B cell (primary cell): ENCODE measurements at regions of chr11 and their contacts with region 1.

Region 1: GRCh38 chr11:125345421-125346178 is 150.5 kb downstream of the FEZ1 start:
- DNase-seq: peak; percentile 25
- ATAC-seq: no peak
- H3K4me3 ChIP-seq: no peak overlapping the region
- H3K4me3 Mint-ChIP-seq: no peak overlapping the region
- H3K27ac ChIP-seq: no peak overlapping the region
- H3K27ac Mint-ChIP-seq: no peak overlapping the region
- H3K4me1 ChIP-seq: peaks cover 0 to 4% of the 10 kb centered on the region in 2 donors
- H3K4me1 Mint-ChIP-seq: no peaks in the 10 kb centered on the region
- H3K27me3 ChIP-seq: peaks cover 0 to 7% (median 0%) of the 10 kb centered on the region in 4 experiments
- H3K27me3 Mint-ChIP-seq: peaks cover 17% of the 10 kb centered on the region
- CTCF ChIP-seq: peak; percentile 71

Region 2: DNA sequence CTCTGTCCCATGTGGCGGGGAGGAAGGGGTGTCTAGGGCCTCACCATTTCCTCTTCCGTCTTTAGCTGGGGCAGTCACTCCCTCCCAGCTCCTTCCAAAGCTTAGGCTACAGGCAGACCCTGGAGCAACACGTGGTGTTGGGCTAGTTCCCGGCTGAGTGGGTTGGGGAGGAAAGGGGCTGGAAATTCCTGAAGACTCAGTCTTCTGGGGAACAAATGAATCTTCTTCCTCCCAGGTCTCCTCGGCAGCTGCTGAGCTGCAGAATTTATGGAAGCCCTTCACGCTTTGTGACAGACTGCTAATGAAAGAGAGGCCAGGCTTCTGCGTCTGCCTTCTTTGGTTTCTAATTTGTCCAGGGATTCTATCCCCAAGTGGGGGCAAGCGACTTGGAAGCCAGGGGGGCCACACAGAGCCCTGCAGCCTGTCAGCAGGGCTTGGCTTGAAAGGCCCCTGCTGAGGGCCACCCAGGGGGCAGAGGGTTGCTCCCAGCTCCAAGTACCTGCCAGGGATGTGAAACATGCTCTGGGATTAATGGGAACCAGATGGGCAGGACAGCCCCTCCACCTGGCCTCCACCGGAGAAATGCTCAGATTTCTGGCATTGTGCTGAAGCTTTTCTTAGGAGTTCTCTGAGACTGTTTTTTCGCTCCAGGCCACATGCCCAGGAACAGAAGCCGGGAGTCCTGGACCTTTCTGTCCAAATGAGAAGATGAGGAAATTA is 57.9 kb before region 1 on chr11:
- CTCF ChIA-PET with region 1: no interaction called
- POLR2A ChIA-PET with region 1: no interaction called
- intact Hi-C with region 1: no loop called
- DNase-seq: no peak
- ATAC-seq: no peak
- H3K4me3 ChIP-seq: no peak overlapping the region
- H3K4me3 Mint-ChIP-seq: no peak overlapping the region
- H3K27ac ChIP-seq: no peak overlapping the region
- H3K27ac Mint-ChIP-seq: no peak overlapping the region
- H3K4me1 ChIP-seq: no peaks in the 10 kb centered on the region
- H3K4me1 Mint-ChIP-seq: no peaks in the 10 kb centered on the region
- H3K27me3 ChIP-seq: no peaks in the 10 kb centered on the region
- H3K27me3 Mint-ChIP-seq: peaks cover 23% of the 10 kb centered on the region
- CTCF ChIP-seq: no peak

Region 3: GRCh38 chr11:125356797-125357196 is 11.2 kb after region 1 on chr11:
- CTCF ChIA-PET with region 1: interaction called, 10 read pairs
- POLR2A ChIA-PET with region 1: no interaction called
- intact Hi-C with region 1: no loop called
- DNase-seq: no peak
- ATAC-seq: no peak
- H3K4me3 ChIP-seq: no peak overlapping the region
- H3K4me3 Mint-ChIP-seq: no peak overlapping the region
- H3K27ac ChIP-seq: no peak overlapping the region
- H3K27ac Mint-ChIP-seq: no peak overlapping the region
- H3K4me1 ChIP-seq: no peaks in the 10 kb centered on the region
- H3K4me1 Mint-ChIP-seq: peaks cover 2% of the 10 kb centered on the region
- H3K27me3 ChIP-seq: no peaks in the 10 kb centered on the region
- H3K27me3 Mint-ChIP-seq: peaks cover 10% of the 10 kb centered on the region
- CTCF ChIP-seq: no peak

Region 4: GRCh38 chr11:125514336-125515101 is 168.9 kb after region 1 on chr11:
- CTCF ChIA-PET with region 1: no interaction called
- POLR2A ChIA-PET with region 1: no interaction called
- intact Hi-C with region 1: no loop called
- DNase-seq: peak; percentile 87
- ATAC-seq: peak; percentile 76
- H3K4me3 ChIP-seq: peak overlapping the region in 1 of 5 experiments; percentile 32
- H3K4me3 Mint-ChIP-seq: peak overlapping the region; percentile 69
- H3K27ac ChIP-seq: peak overlapping the region; percentile 42 to 78
- H3K27ac Mint-ChIP-seq: peak overlapping the region; percentile 88
- H3K4me1 ChIP-seq: peaks cover 24 to 26% of the 10 kb centered on the region in 2 donors
- H3K4me1 Mint-ChIP-seq: peaks cover 34% of the 10 kb centered on the region
- H3K27me3 ChIP-seq: peaks cover 0 to 3% (median 0%) of the 10 kb centered on the region in 4 experiments
- H3K27me3 Mint-ChIP-seq: no peaks in the 10 kb centered on the region
- CTCF ChIP-seq: no peak

Region 5: DNA sequence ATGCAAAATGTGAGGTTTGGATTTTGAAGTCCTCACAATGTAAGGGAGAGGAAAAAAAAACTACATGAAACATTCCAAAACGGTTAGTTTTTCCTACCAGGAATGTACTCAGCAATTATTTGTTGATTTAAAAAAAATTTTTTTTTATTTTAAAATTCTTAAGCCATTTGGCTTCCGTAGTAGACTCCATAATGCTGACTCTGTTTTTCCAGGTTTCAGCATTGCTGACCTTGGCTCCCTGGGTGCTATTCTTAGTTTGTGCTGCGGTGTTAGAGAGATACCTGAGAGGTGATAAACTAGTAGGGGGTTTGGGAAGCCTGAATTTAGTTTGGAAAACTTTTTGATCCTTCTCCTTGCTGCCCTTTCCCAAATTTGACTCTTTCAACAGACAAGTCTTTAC is 257.6 kb after region 1 on chr11:
- CTCF ChIA-PET with region 1: no interaction called
- POLR2A ChIA-PET with region 1: no interaction called
- intact Hi-C with region 1: no loop called
- DNase-seq: no peak
- ATAC-seq: no peak
- H3K4me3 ChIP-seq: no peak overlapping the region
- H3K4me3 Mint-ChIP-seq: no peak overlapping the region
- H3K27ac ChIP-seq: no peak overlapping the region
- H3K27ac Mint-ChIP-seq: no peak overlapping the region
- H3K4me1 ChIP-seq: no peaks in the 10 kb centered on the region
- H3K4me1 Mint-ChIP-seq: no peaks in the 10 kb centered on the region
- H3K27me3 ChIP-seq: no peaks in the 10 kb centered on the region
- H3K27me3 Mint-ChIP-seq: no peaks in the 10 kb centered on the region
- CTCF ChIP-seq: no peak

Region 6: GRCh38 chr11:125784678-125785077 is 439.1 kb after region 1 on chr11:
- CTCF ChIA-PET with region 1: no interaction called
- POLR2A ChIA-PET with region 1: no interaction called
- intact Hi-C with region 1: no loop called
- DNase-seq: no peak
- ATAC-seq: no peak
- H3K4me3 ChIP-seq: no peak overlapping the region
- H3K4me3 Mint-ChIP-seq: no peak overlapping the region
- H3K27ac ChIP-seq: no peak overlapping the region
- H3K27ac Mint-ChIP-seq: no peak overlapping the region
- H3K4me1 ChIP-seq: no peaks in the 10 kb centered on the region
- H3K4me1 Mint-ChIP-seq: no peaks in the 10 kb centered on the region
- H3K27me3 ChIP-seq: no peaks in the 10 kb centered on the region
- H3K27me3 Mint-ChIP-seq: peaks cover 1% of the 10 kb centered on the region
- CTCF ChIP-seq: no peak